GM18951 (cell line): ENCODE measurements at regions of chrX and their contacts with region 1.

Region 1: GRCh38 chrX:12901486-12901885 is 4.9 kb upstream of the TLR8 start:
- POLR2A ChIP-seq: no peak

Region 2: DNA sequence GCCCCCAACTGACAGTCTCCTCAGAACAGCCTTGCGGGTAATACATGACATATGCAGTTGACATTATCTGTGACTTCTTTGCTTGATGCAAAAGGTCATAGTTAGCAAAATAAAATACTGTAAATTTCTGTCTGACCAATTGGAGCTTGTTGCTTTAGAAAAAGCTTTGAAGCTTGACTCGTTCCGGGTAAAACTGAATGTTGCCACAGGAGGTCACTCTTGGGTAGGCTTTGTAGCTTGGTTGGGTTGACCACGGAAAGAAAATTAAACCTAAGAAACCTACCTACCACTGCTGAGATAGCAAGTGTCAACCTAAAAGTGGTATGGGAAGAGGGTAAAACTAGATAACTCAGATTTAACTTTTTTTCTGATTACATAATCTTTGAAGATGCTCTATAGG is 87.1 kb before region 1 on chrX:
- in situ Hi-C with region 1: loop called (anchors 5 kb)
- POLR2A ChIP-seq: no peak

Region 3: GRCh38 chrX:14015294-14015693 is 1113.8 kb after region 1 on chrX:
- in situ Hi-C with region 1: loop called (anchors 25 kb)
- POLR2A ChIP-seq: no peak

Region 4: GRCh38 chrX:14064626-14065432 is 1163.3 kb after region 1 on chrX:
- in situ Hi-C with region 1: no loop called
- POLR2A ChIP-seq: no peak